CD4-positive, alpha-beta memory T cell (primary cell): ENCODE measurements at regions of chr6 and their contacts with region 1.

Region 1: GRCh38 chr6:154675602-154676088 is 57.6 kb upstream of the SCAF8 start:
- DNase-seq: peak; percentile 85 to 90 (median 87)
- H3K4me3 ChIP-seq: no peak overlapping the region
- H3K4me3 Mint-ChIP-seq: no peak overlapping the region
- H3K27ac ChIP-seq: no peak overlapping the region
- H3K27ac Mint-ChIP-seq: no peak overlapping the region
- H3K4me1 ChIP-seq: no peaks in the 10 kb centered on the region
- H3K4me1 Mint-ChIP-seq: no peaks in the 10 kb centered on the region
- H3K27me3 ChIP-seq: no peaks in the 10 kb centered on the region
- H3K27me3 Mint-ChIP-seq: no peaks in the 10 kb centered on the region

Region 2: GRCh38 chr6:154156135-154156896 is 519.3 kb before region 1 on chr6:
- CTCF ChIA-PET with region 1: interaction called, 4 read pairs
- POLR2A ChIA-PET with region 1: no interaction called
- intact Hi-C with region 1: loop called (anchors 1 kb)
- DNase-seq: peak; percentile 48 to 76 (median 56)
- H3K4me3 ChIP-seq: peak overlapping the region; percentile 32 to 46
- H3K4me3 Mint-ChIP-seq: peak overlapping the region; percentile 67 to 92 (median 84)
- H3K27ac ChIP-seq: peak overlapping the region; percentile 72
- H3K27ac Mint-ChIP-seq: peak overlapping the region; percentile 84 to 94 (median 93)
- H3K4me1 ChIP-seq: peaks cover 45% of the 10 kb centered on the region
- H3K4me1 Mint-ChIP-seq: peaks cover 38 to 66% (median 49%) of the 10 kb centered on the region in 4 donors
- H3K27me3 ChIP-seq: no peaks in the 10 kb centered on the region
- H3K27me3 Mint-ChIP-seq: no peaks in the 10 kb centered on the region

Region 3: GRCh38 chr6:154457881-154458284 is 217.8 kb before region 1 on chr6:
- CTCF ChIA-PET with region 1: no interaction called
- POLR2A ChIA-PET with region 1: no interaction called
- intact Hi-C with region 1: no loop called
- DNase-seq: no peak
- H3K4me3 ChIP-seq: no peak overlapping the region
- H3K4me3 Mint-ChIP-seq: no peak overlapping the region
- H3K27ac ChIP-seq: no peak overlapping the region
- H3K27ac Mint-ChIP-seq: no peak overlapping the region
- H3K4me1 ChIP-seq: no peaks in the 10 kb centered on the region
- H3K4me1 Mint-ChIP-seq: peaks cover 4 to 7% (median 5%) of the 10 kb centered on the region in 4 donors
- H3K27me3 ChIP-seq: no peaks in the 10 kb centered on the region
- H3K27me3 Mint-ChIP-seq: peaks cover 3 to 8% of the 10 kb centered on the region in 2 donors

Region 4: DNA sequence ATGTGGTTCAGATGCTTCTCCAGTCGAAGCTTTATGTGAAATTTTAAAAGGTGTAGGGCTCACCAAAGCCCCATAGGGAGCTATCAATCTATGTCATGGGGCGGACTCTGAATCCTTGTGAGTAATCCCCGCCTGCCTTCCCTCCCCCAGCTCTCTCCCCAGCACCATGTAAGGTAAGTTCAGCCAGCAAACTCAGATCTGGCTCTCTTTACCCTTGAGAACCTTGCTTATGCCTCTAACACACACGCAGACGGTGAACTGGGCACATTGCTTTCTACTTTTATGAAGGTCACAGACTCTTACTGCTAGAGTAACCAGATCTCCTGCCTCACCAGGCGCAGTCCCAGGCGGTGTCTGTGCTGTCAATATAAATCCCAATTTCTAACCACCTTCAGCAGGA is 82.5 kb before region 1 on chr6:
- CTCF ChIA-PET with region 1: no interaction called
- POLR2A ChIA-PET with region 1: no interaction called
- intact Hi-C with region 1: no loop called
- DNase-seq: no peak
- H3K4me3 ChIP-seq: no peak overlapping the region
- H3K4me3 Mint-ChIP-seq: no peak overlapping the region
- H3K27ac ChIP-seq: no peak overlapping the region
- H3K27ac Mint-ChIP-seq: no peak overlapping the region
- H3K4me1 ChIP-seq: no peaks in the 10 kb centered on the region
- H3K4me1 Mint-ChIP-seq: no peaks in the 10 kb centered on the region
- H3K27me3 ChIP-seq: no peaks in the 10 kb centered on the region
- H3K27me3 Mint-ChIP-seq: no peaks in the 10 kb centered on the region

Region 5: GRCh38 chr6:154638369-154638768 is 37.3 kb before region 1 on chr6:
- CTCF ChIA-PET with region 1: no interaction called
- POLR2A ChIA-PET with region 1: no interaction called
- intact Hi-C with region 1: no loop called
- DNase-seq: no peak
- H3K4me3 ChIP-seq: no peak overlapping the region
- H3K4me3 Mint-ChIP-seq: no peak overlapping the region
- H3K27ac ChIP-seq: no peak overlapping the region
- H3K27ac Mint-ChIP-seq: no peak overlapping the region
- H3K4me1 ChIP-seq: no peaks in the 10 kb centered on the region
- H3K4me1 Mint-ChIP-seq: no peaks in the 10 kb centered on the region
- H3K27me3 ChIP-seq: no peaks in the 10 kb centered on the region
- H3K27me3 Mint-ChIP-seq: peaks cover under 1 to 7% of the 10 kb centered on the region in 2 donors

Region 6: GRCh38 chr6:154689493-154690255 is 14.0 kb after region 1 on chr6:
- CTCF ChIA-PET with region 1: interaction called, 23 read pairs
- POLR2A ChIA-PET with region 1: no interaction called
- intact Hi-C with region 1: no loop called
- DNase-seq: no peak
- H3K4me3 ChIP-seq: no peak overlapping the region
- H3K4me3 Mint-ChIP-seq: no peak overlapping the region
- H3K27ac ChIP-seq: no peak overlapping the region
- H3K27ac Mint-ChIP-seq: no peak overlapping the region
- H3K4me1 ChIP-seq: no peaks in the 10 kb centered on the region
- H3K4me1 Mint-ChIP-seq: no peaks in the 10 kb centered on the region
- H3K27me3 ChIP-seq: no peaks in the 10 kb centered on the region
- H3K27me3 Mint-ChIP-seq: no peaks in the 10 kb centered on the region

Region 7: GRCh38 chr6:154733012-154733625 is 57.5 kb after region 1 on chr6 and contains the start of gene SCAF8:
- CTCF ChIA-PET with region 1: interaction called, 16 read pairs
- POLR2A ChIA-PET with region 1: interaction called, 4 read pairs
- intact Hi-C with region 1: loop called (anchors 1 kb)
- DNase-seq: peak; percentile 77 to 93 (median 88)
- H3K4me3 ChIP-seq: peak within 1 kb of the TSS; percentile 63 to 68
- H3K4me3 Mint-ChIP-seq: peak within 1 kb of the TSS; percentile 87 to 95 (median 90)
- H3K27ac ChIP-seq: peak within 1 kb of the TSS; percentile 91
- H3K27ac Mint-ChIP-seq: peak within 1 kb of the TSS; percentile 82 to 98 (median 95)
- H3K4me1 ChIP-seq: peaks cover 45% of the 10 kb centered on the region
- H3K4me1 Mint-ChIP-seq: peaks cover 26 to 48% (median 36%) of the 10 kb centered on the region in 4 donors
- H3K27me3 ChIP-seq: no peaks in the 10 kb centered on the region
- H3K27me3 Mint-ChIP-seq: no peaks in the 10 kb centered on the region
- total RNA-seq, gene SCAF8: 59.9 to 60.5 TPM

Region 8: DNA sequence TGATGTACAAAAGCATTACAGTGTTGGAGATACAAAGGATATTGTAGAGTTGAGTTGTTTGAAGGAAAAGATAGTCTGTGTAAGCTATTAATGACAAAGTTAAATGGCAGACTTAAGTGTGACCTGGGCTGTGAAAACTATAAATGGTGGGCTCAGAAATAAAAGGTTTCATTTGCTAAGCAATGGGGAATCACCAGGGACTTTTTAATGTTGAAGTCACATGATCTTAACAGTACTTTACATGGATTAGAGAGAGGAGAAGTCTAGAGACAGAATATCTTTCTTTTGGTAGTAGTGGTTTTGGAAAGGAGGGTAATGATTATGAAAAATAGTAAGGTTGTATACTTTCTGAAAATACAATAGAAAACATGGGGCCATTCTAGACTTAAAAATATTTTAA is 124.7 kb after region 1 on chr6:
- CTCF ChIA-PET with region 1: interaction called, 187 read pairs
- POLR2A ChIA-PET with region 1: interaction called, 5 read pairs
- intact Hi-C with region 1: loop called (anchors 1 kb)
- DNase-seq: no peak
- H3K4me3 ChIP-seq: no peak overlapping the region
- H3K4me3 Mint-ChIP-seq: peak overlapping the region in 1 of 8 donors; percentile 18
- H3K27ac ChIP-seq: no peak overlapping the region
- H3K27ac Mint-ChIP-seq: peak overlapping the region; percentile 7 to 93 (median 27)
- H3K4me1 ChIP-seq: peaks cover 13% of the 10 kb centered on the region
- H3K4me1 Mint-ChIP-seq: peaks cover 19 to 40% (median 23%) of the 10 kb centered on the region in 4 donors
- H3K27me3 ChIP-seq: no peaks in the 10 kb centered on the region
- H3K27me3 Mint-ChIP-seq: no peaks in the 10 kb centered on the region

Region 9: DNA sequence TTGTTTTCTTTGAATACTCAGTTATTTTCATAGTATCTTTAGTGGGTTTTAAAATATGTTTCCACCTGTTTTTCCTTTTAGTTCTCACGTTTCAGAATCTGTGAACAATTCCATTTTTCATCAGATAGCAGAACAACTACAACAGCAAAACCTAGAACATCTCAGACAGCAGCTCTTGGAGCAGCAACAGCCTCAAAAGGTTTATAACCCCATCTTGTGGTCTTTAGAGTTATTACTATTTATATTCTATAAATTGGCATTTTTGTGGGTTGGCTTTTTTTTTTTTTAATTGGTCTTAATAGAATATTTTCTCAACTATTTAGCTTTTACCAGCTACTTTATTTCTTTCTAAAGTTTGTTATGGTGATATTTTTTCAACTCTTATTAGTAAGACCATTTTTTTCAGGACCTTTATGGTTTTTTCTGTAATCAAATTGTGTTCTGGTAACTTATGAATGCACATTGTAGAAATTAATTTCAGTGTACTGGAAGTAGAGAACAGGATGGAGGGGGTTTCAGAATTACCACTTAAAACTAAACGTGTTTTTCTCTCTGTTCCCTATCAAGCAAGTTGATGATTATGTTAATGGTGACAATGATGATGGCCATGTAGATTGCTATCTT is 129.8 kb after region 1 on chr6:
- CTCF ChIA-PET with region 1: interaction called, 187 read pairs
- POLR2A ChIA-PET with region 1: interaction called, 5 read pairs
- intact Hi-C with region 1: loop called (anchors 1 kb)
- DNase-seq: peak in 4 of 5 donors; percentile 34 to 49 (median 45)
- H3K4me3 ChIP-seq: no peak overlapping the region
- H3K4me3 Mint-ChIP-seq: no peak overlapping the region
- H3K27ac ChIP-seq: no peak overlapping the region
- H3K27ac Mint-ChIP-seq: peak overlapping the region in 3 of 7 donors; percentile 22 to 78 (median 75)
- H3K4me1 ChIP-seq: peaks cover 1% of the 10 kb centered on the region
- H3K4me1 Mint-ChIP-seq: peaks cover 1 to 7% (median 2%) of the 10 kb centered on the region in 4 donors
- H3K27me3 ChIP-seq: no peaks in the 10 kb centered on the region
- H3K27me3 Mint-ChIP-seq: no peaks in the 10 kb centered on the region

Region 10: DNA sequence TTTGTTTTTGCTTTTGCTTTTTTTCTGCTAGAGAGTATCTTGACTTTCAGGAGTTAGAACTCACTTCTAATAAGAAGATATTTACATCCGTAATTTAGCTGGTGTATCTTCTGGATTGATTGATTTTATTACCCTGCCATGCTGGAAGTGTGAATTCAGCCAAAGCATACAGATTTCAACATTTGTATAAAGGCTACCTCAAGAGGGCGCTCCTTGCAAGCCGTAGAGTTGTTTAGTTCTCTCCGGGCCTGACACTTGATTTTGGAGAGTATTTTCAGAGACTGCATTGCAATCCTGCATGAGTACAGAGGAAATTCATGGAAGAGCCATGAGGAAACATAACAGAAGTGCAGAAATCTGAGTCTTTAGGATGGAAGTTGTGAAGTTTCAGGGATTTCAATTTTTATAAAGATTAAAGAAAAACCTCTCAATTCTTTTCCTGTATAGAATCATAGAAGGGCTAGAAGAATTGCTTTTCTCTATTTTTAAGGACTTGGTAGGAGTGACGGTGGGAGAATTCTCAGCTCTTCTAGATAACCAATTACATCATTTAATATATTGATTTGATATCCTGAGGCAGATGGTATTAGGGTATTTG is 252.8 kb after region 1 on chr6:
- CTCF ChIA-PET with region 1: interaction called, 10 read pairs
- POLR2A ChIA-PET with region 1: no interaction called
- intact Hi-C with region 1: loop called (anchors 1 kb)
- DNase-seq: peak; percentile 48 to 56 (median 54)
- H3K4me3 ChIP-seq: no peak overlapping the region
- H3K4me3 Mint-ChIP-seq: no peak overlapping the region
- H3K27ac ChIP-seq: no peak overlapping the region
- H3K27ac Mint-ChIP-seq: peak overlapping the region in 1 of 7 donors; percentile 65
- H3K4me1 ChIP-seq: peaks cover 3% of the 10 kb centered on the region
- H3K4me1 Mint-ChIP-seq: peaks cover 0 to 6% (median 3%) of the 10 kb centered on the region in 4 donors
- H3K27me3 ChIP-seq: no peaks in the 10 kb centered on the region
- H3K27me3 Mint-ChIP-seq: no peaks in the 10 kb centered on the region

Region 11: DNA sequence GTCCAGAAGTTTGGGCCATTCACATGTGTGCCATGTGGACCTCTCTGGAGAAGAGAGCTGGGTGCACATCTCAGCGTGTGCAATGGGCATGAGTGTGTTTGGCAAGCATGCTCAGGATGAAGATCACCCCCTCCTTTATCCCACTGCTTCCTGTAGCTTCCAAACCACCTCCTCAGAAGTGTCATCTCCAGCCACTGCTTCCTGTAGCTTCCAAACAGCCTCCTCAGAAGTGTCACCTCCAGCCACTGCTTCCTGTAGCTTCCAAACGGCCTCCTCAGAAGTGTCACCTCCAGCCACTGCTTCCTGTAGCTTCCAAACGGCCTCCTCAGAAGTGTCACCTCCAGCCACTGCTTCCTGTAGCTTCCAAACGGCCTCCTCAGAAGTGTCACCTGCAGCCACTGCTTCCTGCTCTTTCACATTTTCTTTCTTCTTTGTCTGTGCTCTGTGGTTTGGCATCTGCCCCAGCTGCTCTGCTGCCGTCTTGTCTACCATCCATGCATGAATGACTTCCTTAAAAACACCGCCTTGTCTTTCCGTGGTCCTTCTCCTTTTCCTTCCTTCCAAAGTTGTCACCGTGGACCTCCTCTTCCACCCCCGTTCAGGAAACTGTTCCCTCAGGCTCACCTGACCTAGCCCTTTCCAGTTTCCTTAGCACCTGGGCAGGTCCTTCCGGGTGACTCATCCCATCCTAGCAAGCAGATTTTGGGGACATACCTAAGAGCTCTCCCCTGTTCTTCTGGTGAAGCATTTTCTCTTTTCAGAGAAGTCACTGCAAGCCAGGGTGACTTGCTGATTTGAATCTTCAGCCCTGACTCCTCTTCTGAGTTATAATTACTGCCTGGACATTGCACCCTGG is 275.9 kb after region 1 on chr6:
- CTCF ChIA-PET with region 1: no interaction called
- POLR2A ChIA-PET with region 1: no interaction called
- intact Hi-C with region 1: no loop called
- DNase-seq: peak; percentile 35 to 61 (median 56)
- H3K4me3 ChIP-seq: no peak overlapping the region
- H3K4me3 Mint-ChIP-seq: peak overlapping the region in 6 of 8 donors; percentile 18 to 75 (median 41)
- H3K27ac ChIP-seq: no peak overlapping the region
- H3K27ac Mint-ChIP-seq: peak overlapping the region; percentile 35 to 82 (median 76)
- H3K4me1 ChIP-seq: peaks cover 28% of the 10 kb centered on the region
- H3K4me1 Mint-ChIP-seq: peaks cover 16 to 41% (median 28%) of the 10 kb centered on the region in 4 donors
- H3K27me3 ChIP-seq: no peaks in the 10 kb centered on the region
- H3K27me3 Mint-ChIP-seq: no peaks in the 10 kb centered on the region